ENCODE measurements at regions of chr9 and their contacts with region 1.

Region 1: DNA sequence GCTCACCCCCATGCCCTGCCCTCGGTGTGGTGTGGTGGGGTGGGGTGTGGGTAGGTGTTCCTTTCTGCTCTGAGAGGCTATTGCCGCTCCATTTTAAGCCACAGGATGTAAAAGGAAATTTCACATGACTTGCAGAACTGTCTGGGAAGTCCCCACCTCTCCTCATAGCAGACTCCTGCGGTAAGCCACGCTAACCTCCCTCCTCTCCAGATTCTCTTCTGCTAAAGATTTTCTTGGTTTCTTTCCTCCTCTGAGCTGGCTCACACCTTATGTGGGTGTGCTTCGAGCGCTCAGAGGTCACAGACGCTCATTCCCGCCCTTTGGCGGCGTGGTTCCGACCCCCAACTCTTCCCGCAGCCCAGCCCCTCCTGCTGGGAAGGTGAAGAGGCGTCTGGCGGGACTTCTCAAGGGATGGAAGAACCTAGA is 32.9 kb upstream of the CDK20 start:
- DNase-seq: no peak
- H3K4me3 ChIP-seq: no peak overlapping the region
- H3K27ac ChIP-seq: no peak overlapping the region
- H3K4me1 ChIP-seq: no peaks in the 10 kb centered on the region
- H3K27me3 ChIP-seq: no peaks in the 10 kb centered on the region
- CTCF ChIP-seq: no peak
- POLR2A ChIP-seq: no peak

Region 2: DNA sequence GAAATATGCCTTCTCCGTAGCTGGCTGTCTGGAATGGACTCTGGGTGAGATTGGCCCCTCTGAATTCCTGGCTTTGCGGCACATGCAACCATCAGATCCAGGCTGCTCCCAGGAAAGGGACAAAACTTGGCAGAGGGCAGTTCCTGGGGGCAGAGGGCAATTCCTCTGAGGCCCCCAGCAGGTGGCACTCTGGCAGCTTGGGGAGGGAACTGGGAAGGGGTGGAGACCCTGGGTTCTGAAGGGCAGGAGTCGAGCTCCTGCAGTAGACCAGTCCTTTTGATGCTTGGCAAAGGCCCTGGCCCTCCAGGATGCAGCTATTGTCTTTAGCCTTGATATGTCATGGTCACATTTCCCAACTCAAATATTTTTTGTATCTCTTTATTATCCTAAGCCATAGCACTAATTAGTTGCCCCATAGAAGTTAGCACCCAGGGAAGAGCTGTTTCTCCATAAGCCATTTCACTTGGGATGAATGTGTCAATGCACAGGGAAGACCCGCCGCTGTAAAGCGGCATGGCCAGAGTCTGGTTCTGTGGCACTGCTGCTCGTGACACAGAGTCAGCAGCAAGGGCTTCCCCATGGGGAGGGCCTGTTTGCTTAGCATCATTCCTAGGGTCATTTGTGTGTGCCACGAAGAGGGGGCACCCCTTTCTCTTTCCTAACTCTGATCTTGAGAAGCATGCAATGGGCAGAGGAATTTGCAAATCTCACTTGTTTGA is 18.3 kb after region 1 on chr9:
- intact Hi-C with region 1: loop called (anchors 2 kb)
- DNase-seq: no peak
- H3K4me3 ChIP-seq: no peak overlapping the region
- H3K27ac ChIP-seq: no peak overlapping the region
- H3K4me1 ChIP-seq: no peaks in the 10 kb centered on the region
- H3K27me3 ChIP-seq: no peaks in the 10 kb centered on the region
- CTCF ChIP-seq: no peak
- POLR2A ChIP-seq: no peak

Region 3: DNA sequence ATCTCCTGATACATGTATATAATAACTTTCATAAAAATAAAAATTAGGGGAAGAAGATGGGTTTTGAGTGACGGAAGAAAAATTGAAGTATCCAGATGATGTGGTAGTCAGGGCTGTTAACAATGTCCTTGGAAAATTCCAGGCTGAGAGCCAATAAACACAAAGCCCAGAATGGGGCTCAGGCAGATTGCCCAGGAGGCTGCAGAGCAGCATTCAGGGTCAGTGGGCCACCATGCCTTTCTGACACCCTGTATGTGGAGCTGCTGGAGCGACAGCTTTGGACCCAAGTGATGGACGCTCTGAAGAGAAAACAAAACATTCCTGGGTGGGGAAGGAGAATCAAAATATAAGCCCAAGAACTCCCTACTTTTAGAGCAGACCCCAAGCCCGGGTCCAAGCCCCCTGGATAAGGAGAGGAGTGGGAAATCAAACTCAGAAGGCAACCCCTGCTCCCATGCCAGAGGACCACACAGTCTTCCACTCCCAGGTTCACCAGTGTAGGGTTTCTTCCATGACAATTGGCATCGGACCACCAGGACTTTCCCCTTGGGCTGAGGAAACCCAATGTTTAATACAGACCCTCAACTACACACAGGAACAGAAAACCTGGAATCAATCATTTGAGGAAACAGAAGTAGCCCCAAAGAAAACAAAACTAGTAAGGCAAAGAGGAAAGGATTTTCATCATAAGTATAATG is 176.7 kb after region 1 on chr9:
- intact Hi-C with region 1: no loop called
- DNase-seq: no peak
- H3K4me3 ChIP-seq: no peak overlapping the region
- H3K27ac ChIP-seq: no peak overlapping the region
- H3K4me1 ChIP-seq: no peaks in the 10 kb centered on the region
- H3K27me3 ChIP-seq: no peaks in the 10 kb centered on the region
- CTCF ChIP-seq: no peak
- POLR2A ChIP-seq: no peak

Measured in uterus (tissue), 4 donors.